AG04450 (cell line): ENCODE measurements at regions of chr3 and their contacts with region 1.

Region 1: DNA sequence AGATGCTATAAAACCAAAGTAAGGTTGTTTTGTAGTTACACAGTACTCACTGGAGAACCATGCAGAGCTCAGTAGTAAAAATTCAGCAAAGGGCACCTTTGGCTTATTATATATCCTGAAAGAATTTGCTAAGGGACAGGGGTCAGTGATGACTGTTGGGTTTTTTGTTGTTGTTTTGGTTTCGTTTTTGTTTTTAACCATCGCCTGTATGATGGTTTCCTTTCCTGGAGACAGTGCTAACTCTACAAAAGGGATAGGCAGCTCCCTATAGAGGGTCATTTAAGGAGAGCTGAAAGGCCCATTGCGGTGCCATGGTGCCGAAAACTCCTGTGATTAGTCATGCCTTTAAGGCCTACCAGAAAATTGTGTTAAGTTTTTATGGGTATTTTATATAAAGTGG is 118.2 kb upstream of the GOLIM4 start:
- DNase-seq: no peak
- H3K4me3 ChIP-seq: no peak overlapping the region
- H3K27ac ChIP-seq: no peak overlapping the region
- H3K27me3 ChIP-seq: no peaks in the 10 kb centered on the region
- CTCF ChIP-seq: no peak

Region 2: DNA sequence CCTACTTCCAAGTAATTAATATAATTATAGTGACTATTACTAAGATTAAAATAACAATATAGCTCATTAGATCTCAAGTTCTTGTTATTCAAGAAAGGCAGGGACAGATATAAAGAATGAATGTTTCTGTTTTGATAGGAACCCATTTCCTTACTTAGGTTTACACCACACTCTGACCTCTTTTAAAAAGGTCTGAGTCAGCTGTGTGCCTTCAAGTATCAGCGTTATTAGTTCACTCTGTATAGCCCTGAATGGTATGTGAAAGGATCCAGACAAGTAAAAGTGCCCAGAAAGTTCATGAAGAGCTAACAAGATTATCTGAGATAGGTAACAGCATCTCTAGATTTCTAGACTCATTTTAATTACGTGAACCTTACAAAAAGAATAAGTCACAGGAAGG is 508.1 kb before region 1 on chr3:
- CTCF ChIA-PET with region 1: no interaction called
- POLR2A ChIA-PET with region 1: no interaction called
- DNase-seq: no peak
- H3K4me3 ChIP-seq: no peak overlapping the region
- H3K27ac ChIP-seq: no peak overlapping the region
- H3K27me3 ChIP-seq: no peaks in the 10 kb centered on the region
- CTCF ChIP-seq: no peak

Region 3: DNA sequence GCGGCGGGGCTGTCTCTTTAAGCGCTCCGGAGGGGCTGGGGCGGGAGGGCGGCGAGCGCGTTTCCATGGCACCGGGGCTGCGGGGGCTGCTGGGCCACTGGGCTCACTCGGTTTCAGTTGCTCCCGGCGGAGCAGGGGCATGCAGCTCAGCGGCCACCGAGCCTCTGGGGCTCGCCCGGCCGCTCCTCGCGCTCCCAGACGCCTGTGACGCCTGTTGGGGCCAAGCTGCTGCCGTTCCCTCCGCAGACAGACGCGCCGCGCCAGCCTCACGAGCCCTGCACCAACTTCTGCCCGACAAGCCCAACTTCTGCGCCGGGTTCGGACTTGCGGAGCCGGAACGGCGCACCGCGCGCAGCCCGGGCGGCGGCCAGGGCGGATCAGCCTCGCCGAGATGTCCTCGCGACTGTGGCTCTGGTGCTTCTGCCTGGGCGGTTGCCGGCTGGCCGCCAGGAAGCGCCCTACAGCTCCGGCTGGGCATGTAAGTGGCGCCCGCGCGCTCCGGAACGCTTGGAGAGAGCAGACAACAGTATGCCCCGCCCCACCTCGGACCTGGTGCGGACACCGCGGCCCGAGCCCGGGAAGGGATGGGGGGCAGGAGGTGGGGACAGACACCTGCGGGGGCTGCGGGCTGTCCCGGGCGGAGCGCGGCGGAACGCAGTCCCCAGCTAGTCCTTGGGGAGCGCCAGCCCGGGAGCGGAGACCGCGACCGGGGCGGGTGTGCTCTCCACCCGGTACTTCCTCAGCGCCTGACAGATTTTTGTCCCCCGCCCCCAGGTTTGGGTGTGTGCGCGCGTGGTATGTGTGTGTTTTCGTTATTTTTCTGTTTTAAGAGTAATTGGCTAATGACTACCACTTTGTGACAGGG is 35.9 kb after region 1 on chr3:
- CTCF ChIA-PET with region 1: interaction called, 20 read pairs
- POLR2A ChIA-PET with region 1: no interaction called
- DNase-seq: peak; percentile 32
- H3K4me3 ChIP-seq: peak overlapping the region; percentile 70
- H3K27ac ChIP-seq: peak overlapping the region; percentile 4
- H3K27me3 ChIP-seq: no peaks in the 10 kb centered on the region
- CTCF ChIP-seq: peak; percentile 38

Region 4: DNA sequence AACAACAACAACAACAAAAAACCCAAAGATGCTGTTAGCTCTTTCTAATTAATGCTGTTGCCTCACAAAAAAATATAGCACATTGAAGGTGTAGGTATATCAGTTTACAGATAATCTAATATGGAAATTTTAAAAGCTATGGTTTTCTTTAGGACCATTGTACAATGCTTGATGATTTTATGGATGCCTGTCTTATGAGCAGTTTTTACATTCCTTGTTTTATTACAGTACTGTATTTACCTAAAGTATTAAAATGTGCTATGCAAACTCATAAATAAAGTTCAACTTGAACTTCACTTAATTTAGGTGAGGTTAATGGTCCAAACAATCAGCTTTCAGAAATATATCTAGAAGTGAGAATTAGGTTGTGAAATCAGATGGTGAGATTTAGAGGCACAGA is 94.0 kb after region 1 on chr3:
- CTCF ChIA-PET with region 1: no interaction called
- POLR2A ChIA-PET with region 1: no interaction called
- DNase-seq: no peak
- H3K4me3 ChIP-seq: no peak overlapping the region
- H3K27ac ChIP-seq: no peak overlapping the region
- H3K27me3 ChIP-seq: no peaks in the 10 kb centered on the region
- CTCF ChIP-seq: no peak

Region 5: GRCh38 chr3:168398371-168399025 is 184.6 kb after region 1 on chr3:
- CTCF ChIA-PET with region 1: no interaction called
- POLR2A ChIA-PET with region 1: no interaction called
- DNase-seq: peak; percentile 30
- H3K4me3 ChIP-seq: no peak overlapping the region
- H3K27ac ChIP-seq: no peak overlapping the region
- H3K27me3 ChIP-seq: no peaks in the 10 kb centered on the region
- CTCF ChIP-seq: no peak

Region 6: DNA sequence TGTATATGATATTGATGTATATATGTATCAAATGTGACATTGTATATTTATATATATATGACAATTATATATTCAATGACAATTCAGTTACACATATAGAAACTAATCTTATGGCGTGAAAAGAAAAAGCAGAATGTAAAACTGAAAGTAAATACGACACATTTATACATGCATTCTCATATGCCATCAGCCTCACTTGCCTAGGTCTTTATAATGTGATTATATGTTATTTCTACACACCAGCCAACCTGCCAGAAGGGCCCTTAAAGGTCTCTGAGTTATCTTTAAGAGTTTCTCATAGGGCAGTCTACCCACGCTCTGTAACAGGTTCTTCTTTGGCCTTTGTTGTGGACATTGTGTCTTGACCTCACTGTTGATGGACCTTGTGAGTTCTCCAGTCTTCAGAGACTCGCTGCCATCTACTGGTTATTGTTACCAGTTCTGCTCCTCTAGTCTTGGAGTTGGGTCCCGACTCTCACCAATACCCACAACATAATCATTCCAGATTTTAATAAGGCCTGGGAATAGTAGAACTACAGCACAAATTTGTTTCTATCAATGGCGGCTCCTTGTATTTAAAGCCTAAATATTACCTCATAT is 253.3 kb after region 1 on chr3:
- CTCF ChIA-PET with region 1: interaction called, 49 read pairs
- POLR2A ChIA-PET with region 1: no interaction called
- DNase-seq: peak; percentile 42
- H3K4me3 ChIP-seq: no peak overlapping the region
- H3K27ac ChIP-seq: no peak overlapping the region
- H3K27me3 ChIP-seq: no peaks in the 10 kb centered on the region
- CTCF ChIP-seq: peak; percentile 68

Region 7: DNA sequence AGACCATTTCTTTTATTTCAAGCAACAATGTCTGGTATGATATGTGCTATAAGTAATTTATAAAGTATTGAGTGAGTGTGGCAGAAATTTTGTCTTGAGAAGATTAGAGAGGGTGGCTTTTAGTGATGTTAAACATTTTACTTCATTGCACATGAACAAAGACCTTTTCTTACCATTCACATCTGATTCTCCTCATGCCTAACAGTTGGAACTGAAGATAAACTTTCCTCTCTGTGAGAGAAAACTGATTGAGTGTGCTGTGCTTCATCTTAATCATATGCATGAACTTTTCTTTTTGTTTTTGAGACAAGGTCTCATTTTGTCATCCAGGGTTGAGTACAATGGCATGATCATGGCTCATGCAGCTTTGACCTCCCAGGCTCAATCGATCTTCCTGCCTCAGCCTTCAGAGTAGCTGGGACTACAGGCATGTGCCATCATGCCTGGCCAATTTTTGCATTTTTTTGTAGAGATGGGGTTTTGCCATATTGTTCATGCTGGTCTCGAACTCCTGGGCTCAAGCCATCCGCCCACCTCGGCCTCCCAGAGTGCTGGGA is 259.5 kb after region 1 on chr3:
- CTCF ChIA-PET with region 1: interaction called, 49 read pairs
- POLR2A ChIA-PET with region 1: no interaction called
- DNase-seq: no peak
- H3K4me3 ChIP-seq: no peak overlapping the region
- H3K27ac ChIP-seq: no peak overlapping the region
- H3K27me3 ChIP-seq: no peaks in the 10 kb centered on the region
- CTCF ChIP-seq: no peak

Region 8: DNA sequence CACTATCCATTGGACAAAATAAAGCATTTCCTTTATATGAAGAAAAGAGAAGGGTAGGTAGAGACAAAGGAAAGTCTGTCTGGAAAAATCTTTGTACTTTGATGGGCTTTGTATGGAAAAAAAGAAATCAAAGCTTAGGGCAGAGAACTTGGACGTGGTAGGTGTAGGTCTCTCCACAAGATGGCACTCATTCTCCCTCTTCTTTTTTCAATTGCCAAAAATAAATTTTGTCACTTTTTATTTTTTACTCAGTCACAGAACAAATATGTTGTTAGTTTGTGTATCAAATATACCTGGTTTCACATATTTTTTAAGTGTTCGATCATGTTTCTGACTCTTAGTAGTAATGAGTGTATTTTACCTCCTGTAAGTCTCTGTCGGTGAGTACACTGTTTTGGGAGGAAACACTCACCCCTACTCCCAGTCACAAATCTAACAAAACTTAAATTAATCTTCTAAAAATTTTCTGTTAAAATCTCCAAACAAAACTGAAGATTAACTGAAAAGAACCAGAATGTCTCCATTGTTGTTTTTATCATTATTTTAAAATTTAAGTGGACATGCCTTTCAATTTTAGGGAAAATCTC is 297.6 kb after region 1 on chr3:
- CTCF ChIA-PET with region 1: interaction called, 11 read pairs
- POLR2A ChIA-PET with region 1: no interaction called
- DNase-seq: no peak
- H3K4me3 ChIP-seq: no peak overlapping the region
- H3K27ac ChIP-seq: no peak overlapping the region
- H3K27me3 ChIP-seq: no peaks in the 10 kb centered on the region
- CTCF ChIP-seq: peak; percentile 68

Region 9: DNA sequence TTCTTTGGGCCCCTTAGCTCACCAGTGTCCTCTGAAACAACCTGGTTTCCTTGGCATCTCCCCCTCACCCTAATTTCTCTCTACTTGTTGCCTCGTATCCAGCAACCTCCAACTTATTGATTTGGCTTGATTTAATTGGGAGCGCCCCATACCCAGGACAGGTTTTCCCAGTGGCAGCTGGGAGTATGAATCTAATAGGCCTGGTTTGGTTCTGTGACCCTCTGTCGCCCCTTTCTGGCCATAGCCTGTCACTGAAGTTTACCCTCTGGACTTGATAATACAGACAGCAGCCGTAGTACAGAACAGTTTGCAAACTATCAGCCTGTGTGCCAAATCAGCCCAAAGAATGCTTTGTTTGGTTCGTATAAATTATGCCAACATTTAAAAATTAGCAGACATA is 406.9 kb after region 1 on chr3:
- CTCF ChIA-PET with region 1: interaction called, 22 read pairs
- POLR2A ChIA-PET with region 1: no interaction called
- DNase-seq: no peak
- H3K4me3 ChIP-seq: no peak overlapping the region
- H3K27ac ChIP-seq: no peak overlapping the region
- H3K27me3 ChIP-seq: no peaks in the 10 kb centered on the region
- CTCF ChIP-seq: peak; percentile 50

Region 10: DNA sequence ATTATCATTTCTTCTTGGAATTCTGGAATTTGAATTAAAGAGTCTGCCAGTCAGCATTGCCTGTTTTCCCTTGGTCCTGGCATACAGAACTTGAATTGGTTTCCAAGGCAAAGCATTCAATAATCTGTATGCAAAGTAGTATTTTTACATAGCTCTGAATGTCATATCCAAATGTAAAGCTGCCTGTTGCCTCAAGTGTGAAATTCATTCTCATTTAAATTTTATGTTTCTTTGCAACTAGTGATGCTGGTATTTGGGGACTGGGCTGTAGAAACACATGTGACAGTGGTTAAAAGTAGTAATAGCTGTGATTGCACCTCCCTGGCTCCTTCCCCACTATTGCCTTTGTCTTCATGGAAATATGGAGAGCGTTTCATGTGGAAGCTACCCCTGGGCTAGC is 625.7 kb after region 1 on chr3:
- CTCF ChIA-PET with region 1: interaction called, 11 read pairs
- POLR2A ChIA-PET with region 1: no interaction called
- DNase-seq: no peak
- H3K4me3 ChIP-seq: no peak overlapping the region
- H3K27ac ChIP-seq: no peak overlapping the region
- H3K27me3 ChIP-seq: peaks cover under 1% of the 10 kb centered on the region
- CTCF ChIP-seq: no peak